ENCODE measurements at regions of chr17 and their contacts with region 1.

Region 1: DNA sequence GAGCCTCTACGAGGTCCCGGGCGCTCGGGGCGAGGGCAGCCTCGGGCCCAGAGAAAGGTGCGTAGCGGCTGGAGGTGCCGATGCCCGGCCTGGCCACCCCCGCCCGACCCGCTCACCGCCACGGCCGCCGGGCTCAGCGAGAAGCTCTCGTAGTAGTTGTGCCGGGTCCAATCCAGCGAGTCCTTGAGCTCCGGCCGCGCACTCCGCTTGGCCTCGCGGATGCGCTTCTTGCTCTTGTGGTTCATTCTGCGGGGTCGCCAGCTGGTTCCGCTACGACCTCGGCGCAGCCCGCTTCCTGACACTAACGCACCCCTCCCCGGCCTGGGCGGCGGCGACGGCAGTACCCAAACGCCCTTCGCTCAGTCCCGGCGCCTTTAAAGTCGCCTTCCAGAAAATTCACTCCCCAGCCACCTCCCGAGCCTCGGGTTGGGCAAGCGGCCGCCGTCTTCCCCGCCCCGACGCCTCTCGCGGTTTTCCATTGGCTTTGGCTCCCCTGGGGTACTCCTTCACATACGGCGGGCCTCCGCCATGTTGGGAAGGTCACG is at the start of gene JMJD6:
- DNase-seq: peak; percentile 100
- H3K4me3 ChIP-seq: peak within 1 kb of the TSS; percentile 78
- H3K27ac ChIP-seq: peak within 1 kb of the TSS; percentile 91
- H3K4me1 ChIP-seq: peaks cover 38% of the 10 kb centered on the region
- CTCF ChIP-seq: no peak
- total RNA-seq, gene JMJD6: 39.9 and 41.2 TPM in 2 replicates

Region 2: DNA sequence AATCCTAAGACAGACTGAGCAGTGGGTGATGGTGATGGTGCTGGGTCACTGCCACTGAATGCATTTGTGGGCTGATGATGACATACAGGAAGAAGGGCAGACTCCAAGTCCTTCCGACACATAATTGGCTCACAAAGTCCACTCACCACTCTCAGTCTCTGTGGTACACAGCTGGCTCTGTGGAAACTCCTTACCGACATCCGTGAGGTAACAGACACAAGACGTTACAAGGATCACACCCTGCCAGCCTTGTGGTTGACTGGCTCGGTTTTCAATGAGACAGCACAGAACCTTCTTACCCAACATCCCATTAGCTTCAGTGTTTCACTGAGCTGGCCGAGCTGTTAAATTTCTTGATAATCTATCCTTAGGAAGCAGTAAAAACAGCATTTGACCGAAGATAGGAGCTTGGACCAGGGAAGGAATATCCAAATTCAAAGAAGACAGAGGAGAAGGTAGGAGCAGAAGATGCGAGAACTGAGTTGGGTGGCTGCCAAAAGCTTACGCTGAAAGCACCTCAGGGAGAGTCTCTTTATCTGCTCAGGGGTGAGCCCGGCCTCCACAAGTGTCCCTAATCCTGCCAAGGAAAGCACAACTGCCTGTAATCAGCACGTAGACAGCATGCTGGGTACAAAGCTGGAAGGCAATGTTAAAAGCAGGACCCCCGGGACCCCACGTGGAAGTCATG is 10.0 kb before region 1 on chr17:
- CTCF ChIA-PET with region 1: no interaction called
- POLR2A ChIA-PET with region 1: interaction called, 11 read pairs
- intact Hi-C with region 1: no loop called
- DNase-seq: no peak
- H3K4me3 ChIP-seq: no peak overlapping the region
- H3K27ac ChIP-seq: no peak overlapping the region
- H3K4me1 ChIP-seq: peaks cover 19% of the 10 kb centered on the region
- CTCF ChIP-seq: no peak

Region 3: GRCh38 chr17:76737082-76737675 is 10.9 kb after region 1 on chr17 and contains the start of gene SRSF2:
- CTCF ChIA-PET with region 1: interaction called, 3 read pairs
- POLR2A ChIA-PET with region 1: interaction called, 10 read pairs
- intact Hi-C with region 1: loop called (anchors 1 kb)
- DNase-seq: peak; percentile 100
- H3K4me3 ChIP-seq: peak within 1 kb of the TSS; percentile 77
- H3K27ac ChIP-seq: peak within 1 kb of the TSS; percentile 92
- H3K4me1 ChIP-seq: peaks cover 53% of the 10 kb centered on the region
- CTCF ChIP-seq: no peak
- total RNA-seq, gene SRSF2: 1,143 and 2,207 TPM in 2 replicates

Region 4: GRCh38 chr17:76781056-76781982 is 55.0 kb after region 1 on chr17:
- CTCF ChIA-PET with region 1: no interaction called
- POLR2A ChIA-PET with region 1: interaction called, 12 read pairs
- intact Hi-C with region 1: loop called (anchors 2 kb)
- DNase-seq: peak; percentile 55
- H3K4me3 ChIP-seq: no peak overlapping the region
- H3K27ac ChIP-seq: peak overlapping the region; percentile 92
- H3K4me1 ChIP-seq: peaks cover 79% of the 10 kb centered on the region
- CTCF ChIP-seq: peak; percentile 65; the same call in 1 of the 2 replicates

Region 5: GRCh38 chr17:76843703-76844484 is 117.6 kb after region 1 on chr17:
- CTCF ChIA-PET with region 1: no interaction called
- POLR2A ChIA-PET with region 1: no interaction called
- intact Hi-C with region 1: loop called (anchors 2 kb)
- DNase-seq: peak; percentile 92
- H3K4me3 ChIP-seq: peak overlapping the region; percentile 29
- H3K27ac ChIP-seq: peak overlapping the region; percentile 93
- H3K4me1 ChIP-seq: peaks cover 99% of the 10 kb centered on the region
- CTCF ChIP-seq: peak; percentile 72

Region 6: DNA sequence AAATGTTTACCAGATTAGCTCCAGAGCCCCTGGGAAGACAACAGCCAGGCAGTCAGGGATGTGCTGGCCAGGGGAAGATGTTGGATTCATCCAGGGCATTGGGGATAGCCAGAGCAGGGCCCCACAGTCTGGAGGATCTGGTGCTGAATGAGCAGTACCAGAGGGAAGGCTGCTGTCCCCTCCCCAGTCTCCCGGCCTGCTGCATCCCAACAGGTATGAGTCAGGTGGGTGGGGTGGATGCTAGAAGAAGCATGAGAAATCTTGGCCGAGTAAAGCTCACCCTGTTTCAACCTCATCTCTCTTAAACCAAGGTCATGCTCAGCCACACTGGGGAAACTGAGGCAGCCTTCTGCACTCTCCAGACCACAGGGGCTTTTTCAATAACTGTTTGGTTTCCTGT is 342.6 kb after region 1 on chr17:
- CTCF ChIA-PET with region 1: no interaction called
- POLR2A ChIA-PET with region 1: no interaction called
- intact Hi-C with region 1: loop called (anchors 5 kb)
- DNase-seq: no peak
- H3K4me3 ChIP-seq: no peak overlapping the region
- H3K27ac ChIP-seq: no peak overlapping the region
- H3K4me1 ChIP-seq: no peaks in the 10 kb centered on the region
- CTCF ChIP-seq: no peak